Left colon (tissue), 2 donors: ENCODE measurements at regions of chr15 and their contacts with region 1.

Region 1: DNA sequence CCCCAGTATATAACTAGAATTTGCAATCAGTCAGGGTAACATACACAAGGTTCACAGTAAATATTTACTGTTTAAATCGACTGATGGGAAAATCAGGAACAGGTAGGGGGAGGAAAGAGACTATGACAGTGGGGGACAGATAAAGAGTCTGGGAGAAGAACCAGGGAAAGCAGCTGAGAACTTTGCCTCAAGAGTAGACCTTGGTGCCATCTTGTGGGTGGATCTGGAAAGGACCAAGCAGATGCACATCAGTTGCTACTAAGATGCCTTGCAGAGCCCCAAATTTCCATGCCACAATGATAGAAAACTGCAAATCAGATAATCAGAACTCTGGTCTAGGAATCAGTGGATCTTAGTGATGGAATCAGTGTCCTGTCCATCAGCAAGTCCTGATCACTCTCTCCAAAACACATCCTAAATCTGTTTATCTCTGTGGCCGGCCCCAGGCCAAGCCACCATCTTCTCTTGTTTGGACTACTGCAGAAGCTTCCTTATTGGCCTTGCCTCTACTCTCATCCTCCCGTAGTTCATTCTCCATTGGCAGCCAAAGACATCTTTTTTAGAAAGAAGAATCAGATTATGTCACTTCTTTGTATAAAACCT is 62.7 kb downstream of the PDE8A start:
- DNase-seq: peak; percentile 56 to 67
- ATAC-seq: peak; percentile 84

Region 2: DNA sequence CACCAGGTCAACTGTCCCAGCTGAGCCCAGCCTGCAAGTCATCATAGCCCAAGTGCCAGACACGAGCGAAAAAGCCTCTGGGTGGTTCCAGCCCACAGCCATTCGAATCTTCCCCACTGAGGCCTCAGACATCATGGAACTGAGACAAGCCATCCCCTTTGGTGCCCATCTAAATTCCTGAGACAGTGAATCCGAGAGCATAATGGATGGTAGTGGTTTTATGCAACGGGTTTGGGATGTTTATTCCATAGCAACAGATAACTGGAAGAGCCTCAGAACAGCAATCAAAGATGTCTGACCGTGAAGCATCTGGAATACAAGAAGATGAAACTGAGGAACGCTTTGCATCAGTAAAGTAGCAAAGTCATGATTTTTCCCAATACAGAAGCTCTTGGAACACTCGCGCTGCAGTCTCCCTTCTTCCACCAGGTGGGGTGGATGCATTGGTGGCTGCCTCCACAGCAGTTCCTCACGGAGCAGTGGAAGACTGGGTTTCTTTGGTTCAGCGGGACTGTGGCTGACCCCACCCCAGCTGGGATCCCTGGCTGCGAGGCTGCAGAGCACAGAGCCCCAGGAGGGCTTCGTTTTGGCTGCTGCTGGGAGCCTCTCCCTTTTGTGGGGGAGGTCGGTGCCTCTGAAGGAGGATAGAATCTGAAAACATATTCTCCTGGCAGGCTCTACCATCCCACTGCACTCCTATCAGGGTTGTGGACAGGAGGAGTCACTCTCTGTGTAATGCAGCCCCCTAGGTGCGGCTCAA is 89.1 kb before region 1 on chr15:
- intact Hi-C with region 1: loop called in 1 of 2 experiments (anchors 2 kb)
- DNase-seq: peak; percentile 67 to 77
- ATAC-seq: peak; percentile 99